Cardiac septum (tissue), 1 donor: ENCODE measurements at regions of chr1 and their contacts with region 1.

Region 1: GRCh38 chr1:21822349-21822748 is 10.3 kb downstream of the LDLRAD2 start:
- DNase-seq: no peak

Region 2: DNA sequence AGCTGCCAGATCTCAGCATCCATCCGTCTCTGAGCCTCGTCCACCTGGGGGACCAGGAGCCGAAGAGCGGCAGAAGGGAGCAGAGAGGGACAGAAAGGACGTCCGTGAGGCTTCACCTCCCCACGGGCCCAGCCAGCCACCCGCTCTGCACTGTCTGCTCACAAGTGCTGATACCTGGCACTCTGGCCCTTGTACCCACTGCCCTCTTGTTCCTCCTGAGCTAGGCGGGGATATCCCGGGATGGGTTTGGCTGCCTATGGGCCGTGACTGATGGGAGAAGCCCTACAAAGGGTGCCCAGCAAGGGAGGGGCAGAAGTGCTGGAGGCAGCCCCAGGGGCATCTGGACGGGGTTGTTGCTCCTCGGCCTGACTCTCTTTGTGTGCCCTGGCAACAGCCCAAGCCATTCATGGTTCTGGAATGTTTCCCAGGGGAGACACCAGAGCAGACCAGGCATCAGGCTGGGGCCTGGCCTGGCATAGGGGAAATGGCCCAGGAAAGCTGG is 47.3 kb after region 1 on chr1:
- intact Hi-C with region 1: loop called (anchors 5 kb)
- DNase-seq: peak; percentile 88

Region 3: GRCh38 chr1:21886486-21887199 is 64.3 kb after region 1 on chr1:
- intact Hi-C with region 1: loop called (anchors 5 kb)
- DNase-seq: no peak